BJ (cell line): ENCODE measurements at regions of chr5 and their contacts with region 1.

Region 1: GRCh38 chr5:173615884-173616576 is 420 bp downstream of the BOD1 start:
- DNase-seq: peak; percentile 20
- H3K4me3 ChIP-seq: peak overlapping the region; percentile 65
- H3K27me3 ChIP-seq: no peaks in the 10 kb centered on the region
- CTCF ChIP-seq: peak; percentile 83

Region 2: DNA sequence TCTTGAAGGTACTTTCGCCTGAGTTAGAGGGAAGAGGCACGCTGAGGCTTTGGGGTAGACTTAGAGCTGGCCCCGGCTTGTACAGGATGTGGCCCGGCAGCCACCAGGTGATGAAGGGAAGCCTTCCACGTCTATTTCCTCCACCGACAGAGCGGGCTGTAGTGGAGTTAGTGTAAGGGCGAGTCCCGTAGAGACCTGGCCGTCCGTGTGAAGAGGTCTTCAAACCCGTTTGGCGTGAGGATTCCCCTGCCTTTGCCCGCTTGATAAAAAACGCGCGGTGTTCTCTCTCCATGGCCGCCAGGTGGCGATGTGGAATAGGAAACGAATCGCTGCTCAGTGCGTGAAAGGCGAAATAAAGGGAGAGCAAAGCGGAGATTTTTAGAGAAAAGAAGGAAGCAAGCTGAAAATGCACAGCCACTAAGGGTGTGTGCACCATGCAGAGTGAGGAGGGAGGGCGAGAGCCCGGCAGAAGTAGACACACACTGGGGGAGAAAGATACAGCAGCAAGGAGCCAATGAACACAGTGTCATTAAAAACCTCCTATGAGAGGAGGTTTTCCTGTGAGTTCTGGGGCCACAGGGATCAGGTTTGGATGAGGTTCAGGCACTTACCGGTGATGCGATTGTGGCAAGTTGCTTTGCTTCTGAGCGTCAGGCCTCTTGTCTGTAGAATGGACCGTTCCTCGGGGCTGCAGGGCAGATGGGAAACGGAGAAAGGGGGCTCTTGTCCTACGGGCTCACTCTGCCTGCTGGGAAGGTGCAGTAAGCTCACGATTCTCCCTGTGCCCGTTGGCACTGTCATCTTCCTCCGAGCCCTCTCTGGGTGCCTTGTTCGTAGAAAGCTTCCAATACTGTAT is 322.0 kb before region 1 on chr5:
- CTCF ChIA-PET with region 1: interaction called, 28 read pairs
- POLR2A ChIA-PET with region 1: no interaction called
- DNase-seq: no peak
- H3K4me3 ChIP-seq: no peak overlapping the region
- H3K27me3 ChIP-seq: no peaks in the 10 kb centered on the region
- CTCF ChIP-seq: peak; percentile 82

Region 3: GRCh38 chr5:173320259-173320658 is 295.8 kb before region 1 on chr5:
- CTCF ChIA-PET with region 1: no interaction called
- POLR2A ChIA-PET with region 1: interaction called, 18 read pairs
- DNase-seq: no peak
- H3K4me3 ChIP-seq: no peak overlapping the region
- H3K27me3 ChIP-seq: no peaks in the 10 kb centered on the region
- CTCF ChIP-seq: peak; percentile 28; the same call in 1 of the 2 replicates

Region 4: DNA sequence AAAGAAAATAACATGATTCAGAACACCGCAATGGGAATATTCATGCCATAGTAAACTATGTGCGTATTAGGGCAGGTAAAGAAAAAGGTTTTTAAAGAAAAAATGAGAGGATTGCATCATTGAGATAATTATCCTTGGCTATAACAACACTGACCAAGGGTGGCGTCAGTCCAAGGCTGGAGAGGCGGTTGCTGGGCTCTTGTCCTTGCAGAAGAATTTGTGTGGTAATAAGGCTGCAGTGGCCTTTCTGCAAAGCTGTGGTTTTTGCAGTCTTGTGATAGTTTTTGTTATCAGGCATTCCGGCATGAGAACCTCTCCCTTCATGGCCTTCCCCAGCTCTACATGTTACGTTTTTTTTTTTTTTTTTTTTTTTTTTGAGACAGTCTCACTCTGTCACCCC is 13.6 kb before region 1 on chr5:
- CTCF ChIA-PET with region 1: interaction called, 10 read pairs
- POLR2A ChIA-PET with region 1: no interaction called
- DNase-seq: no peak
- H3K4me3 ChIP-seq: no peak overlapping the region
- H3K27me3 ChIP-seq: no peaks in the 10 kb centered on the region
- CTCF ChIP-seq: 0 out of 2 replicates have a peak, but pooled peaks have one; percentile 7

Region 5: DNA sequence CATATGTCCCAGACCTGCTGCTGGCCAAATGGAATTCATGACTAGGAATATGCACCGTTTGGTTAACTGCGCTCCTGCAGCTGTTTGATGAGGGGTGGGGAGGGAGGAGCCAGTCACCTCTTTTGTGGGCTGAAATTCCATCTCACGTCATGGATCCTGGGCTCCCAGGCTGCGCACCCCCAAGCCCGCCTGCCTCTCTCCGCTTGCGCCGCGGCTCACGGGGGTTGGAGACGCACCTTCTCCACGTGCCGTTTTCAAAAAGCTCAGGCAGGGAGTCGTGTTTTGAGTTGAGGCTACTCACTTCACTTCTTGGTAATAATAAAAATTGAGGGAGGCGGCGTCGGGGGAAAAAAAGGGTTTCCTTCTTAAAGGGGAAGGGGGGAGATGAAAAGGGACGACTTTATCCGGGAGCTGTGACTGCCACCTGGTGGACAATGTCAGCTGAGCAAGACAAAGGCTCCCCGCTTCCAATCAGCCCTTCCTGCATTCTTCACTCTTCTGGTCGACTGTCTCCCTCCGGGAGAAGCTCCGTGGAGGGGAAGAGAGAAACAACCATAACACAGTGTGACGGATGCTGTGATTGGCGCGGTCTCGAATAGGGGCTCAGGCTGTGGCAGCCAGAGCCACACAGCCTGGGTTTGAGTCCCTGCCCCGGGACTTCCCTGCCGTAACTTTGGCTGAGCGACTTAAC is 357.0 kb after region 1 on chr5:
- CTCF ChIA-PET with region 1: interaction called, 150 read pairs
- POLR2A ChIA-PET with region 1: no interaction called
- DNase-seq: no peak
- H3K4me3 ChIP-seq: peak overlapping the region; percentile 36
- H3K27me3 ChIP-seq: no peaks in the 10 kb centered on the region; the same call in 1 of the 2 replicates
- CTCF ChIP-seq: peak; percentile 82

Region 6: GRCh38 chr5:173984218-173984617 is 368.2 kb after region 1 on chr5:
- CTCF ChIA-PET with region 1: interaction called, 12 read pairs
- POLR2A ChIA-PET with region 1: no interaction called
- DNase-seq: no peak
- H3K4me3 ChIP-seq: no peak overlapping the region
- H3K27me3 ChIP-seq: peaks cover 4% of the 10 kb centered on the region; the same call in 1 of the 2 replicates
- CTCF ChIP-seq: peak; percentile 49; the same call in 1 of the 2 replicates

Region 7: DNA sequence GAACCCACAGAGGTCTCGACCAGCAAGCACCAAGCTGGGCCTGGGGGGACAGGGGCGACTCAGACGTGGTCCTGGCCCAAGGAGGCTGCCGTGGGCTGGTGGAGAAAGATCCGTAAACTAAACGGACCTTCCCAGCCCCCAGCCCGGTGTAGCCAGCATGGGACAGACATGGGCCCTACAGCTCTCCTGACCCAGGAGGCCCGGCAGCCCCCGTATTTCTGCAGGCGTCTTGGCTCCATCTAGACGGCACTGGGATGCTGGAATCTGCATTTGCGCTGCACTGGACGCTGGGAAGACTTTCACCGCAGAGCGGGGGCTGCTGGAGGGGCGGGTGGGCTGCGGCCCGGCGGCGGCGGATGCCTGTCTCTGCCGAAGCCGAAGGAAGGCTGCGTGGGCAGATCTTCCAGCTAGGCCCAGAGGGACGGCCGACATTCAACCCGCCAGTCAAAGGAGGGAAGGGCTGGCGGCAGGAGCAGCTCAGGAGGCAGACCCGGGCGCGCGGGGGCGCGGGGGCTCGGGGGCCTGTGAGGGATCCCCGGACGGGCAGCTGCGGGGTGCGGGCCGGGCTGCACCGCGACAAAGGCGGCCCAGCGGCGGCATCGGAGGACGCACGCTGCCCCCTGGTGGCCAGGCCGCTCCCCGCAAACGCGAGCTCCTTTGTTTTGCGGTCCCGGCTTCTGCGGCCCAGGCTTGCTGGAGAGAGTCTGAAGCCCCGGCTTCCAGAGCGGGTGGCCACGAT is 695.7 kb after region 1 on chr5:
- CTCF ChIA-PET with region 1: interaction called, 14 read pairs
- POLR2A ChIA-PET with region 1: no interaction called
- DNase-seq: no peak
- H3K4me3 ChIP-seq: peak overlapping the region; percentile 40
- H3K27me3 ChIP-seq: no peaks in the 10 kb centered on the region
- CTCF ChIP-seq: peak; percentile 74